ENCODE measurements at regions of chr16 and their contacts with region 1.

Region 1: DNA sequence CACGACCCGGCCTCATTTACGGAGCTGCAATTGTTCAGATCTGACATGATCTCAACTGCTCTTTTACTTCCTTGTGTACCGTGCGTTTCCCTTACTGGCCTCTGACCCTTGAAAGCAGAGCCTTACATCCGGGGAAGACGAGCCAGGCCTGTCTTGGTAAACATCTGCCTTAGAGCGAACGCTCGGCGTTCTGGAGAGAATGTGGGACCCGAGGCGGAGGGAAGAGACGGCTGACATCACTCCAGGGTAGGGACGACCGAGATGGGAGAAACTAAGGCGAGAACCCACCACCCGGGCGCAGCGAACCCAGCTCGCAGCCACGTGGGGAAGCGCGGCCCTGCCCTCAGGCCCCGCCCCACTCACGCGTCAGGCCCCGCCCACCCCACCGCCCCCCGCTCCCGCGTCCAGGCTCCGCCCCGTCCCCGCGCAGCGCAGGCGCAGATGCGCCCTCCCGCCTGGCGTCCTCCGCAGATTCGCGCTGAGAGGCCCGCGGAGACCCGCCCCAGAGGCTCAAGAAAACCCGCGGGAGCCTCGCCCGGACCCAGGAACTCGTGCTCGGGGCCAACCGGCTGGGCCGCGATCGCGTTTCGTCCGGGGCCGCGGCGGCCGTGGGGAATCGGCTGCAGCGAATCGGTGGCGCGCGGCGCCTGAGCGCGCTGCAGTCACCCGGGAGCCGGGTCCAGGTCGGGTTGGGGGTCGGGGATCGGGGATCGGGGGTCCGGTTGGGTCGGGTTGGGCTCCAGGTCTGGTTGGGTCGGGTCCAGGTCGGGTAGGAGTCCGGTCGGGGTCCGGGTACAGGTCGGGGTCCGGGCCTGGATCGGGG is at the start of gene TELO2:
- DNase-seq: peak; percentile 92
- ATAC-seq: peak; percentile 89
- H3K4me3 ChIP-seq: peak within 1 kb of the TSS; percentile 36 to 87 (median 75)
- H3K4me3 Mint-ChIP-seq: peak within 1 kb of the TSS; percentile 97
- H3K27ac ChIP-seq: peak within 1 kb of the TSS; percentile 95 to 96
- H3K27ac Mint-ChIP-seq: peak within 1 kb of the TSS; percentile 99
- H3K4me1 ChIP-seq: peaks cover 17 to 25% of the 10 kb centered on the region in 2 donors
- H3K4me1 Mint-ChIP-seq: peaks cover 17% of the 10 kb centered on the region
- H3K27me3 ChIP-seq: no peaks in the 10 kb centered on the region
- H3K27me3 Mint-ChIP-seq: no peaks in the 10 kb centered on the region
- CTCF ChIP-seq: no peak
- total RNA-seq, gene TELO2: 81.9 and 88.4 TPM in 2 replicates

Region 2: DNA sequence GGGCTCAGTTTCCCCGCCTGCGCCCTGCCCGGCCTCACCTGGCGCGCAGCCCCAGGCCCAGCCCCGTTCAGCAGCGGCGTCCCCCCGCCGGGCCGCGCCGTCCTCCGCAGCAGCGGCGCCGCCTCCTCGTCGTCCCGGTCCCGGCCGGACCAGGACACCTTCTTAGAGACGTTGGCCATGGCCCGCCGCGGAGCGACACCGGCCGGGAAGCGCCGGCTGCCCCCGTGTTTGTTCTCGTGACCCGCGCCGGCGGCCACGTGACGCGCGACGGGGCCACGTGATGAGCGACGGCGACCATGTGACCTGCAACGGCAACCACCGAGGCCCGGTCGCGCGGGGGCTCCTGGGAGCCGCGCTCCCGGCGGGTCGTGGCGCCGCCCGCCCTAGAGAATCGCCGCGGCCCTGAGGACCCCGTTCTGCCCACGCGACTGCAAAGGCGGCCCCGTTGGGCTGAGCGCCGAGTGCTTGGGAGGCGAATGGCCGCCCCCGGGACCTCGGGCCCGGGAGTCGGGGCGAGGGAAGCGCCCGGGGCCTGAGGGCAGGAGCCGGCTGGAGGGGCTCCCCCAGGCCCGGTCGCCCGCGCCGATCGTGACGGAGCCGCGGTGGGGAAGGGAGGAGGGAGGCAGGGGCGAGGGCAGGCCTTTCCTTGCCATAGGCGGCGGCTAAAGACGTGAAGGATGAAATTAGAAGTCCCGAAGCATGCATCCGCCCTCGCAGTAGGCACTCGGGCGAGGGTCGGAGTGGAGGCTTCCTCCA is 18.2 kb before region 1 on chr16 and contains the start of gene CLCN7:
- CTCF ChIA-PET with region 1: interaction called, 9 read pairs
- POLR2A ChIA-PET with region 1: interaction called, 12 read pairs
- intact Hi-C with region 1: loop called (anchors 1 kb)
- DNase-seq: peak; percentile 95
- ATAC-seq: peak; percentile 79
- H3K4me3 ChIP-seq: peak within 1 kb of the TSS; percentile 57 to 80 (median 70)
- H3K4me3 Mint-ChIP-seq: peak within 1 kb of the TSS; percentile 88
- H3K27ac ChIP-seq: peak within 1 kb of the TSS; percentile 88 to 96
- H3K27ac Mint-ChIP-seq: peak within 1 kb of the TSS; percentile 93
- H3K4me1 ChIP-seq: peaks cover 50 to 62% of the 10 kb centered on the region in 2 donors
- H3K4me1 Mint-ChIP-seq: peaks cover 54% of the 10 kb centered on the region
- H3K27me3 ChIP-seq: no peaks in the 10 kb centered on the region
- H3K27me3 Mint-ChIP-seq: no peaks in the 10 kb centered on the region
- CTCF ChIP-seq: no peak
- total RNA-seq, gene CLCN7: 274 and 286 TPM in 2 replicates